GM10248 (cell line): ENCODE measurements at regions of chr5 and their contacts with region 1.

Region 1: GRCh38 chr5:173615884-173616576 is 420 bp downstream of the BOD1 start:
- DNase-seq: peak; percentile 75
- CTCF ChIP-seq: peak; percentile 64

Region 2: DNA sequence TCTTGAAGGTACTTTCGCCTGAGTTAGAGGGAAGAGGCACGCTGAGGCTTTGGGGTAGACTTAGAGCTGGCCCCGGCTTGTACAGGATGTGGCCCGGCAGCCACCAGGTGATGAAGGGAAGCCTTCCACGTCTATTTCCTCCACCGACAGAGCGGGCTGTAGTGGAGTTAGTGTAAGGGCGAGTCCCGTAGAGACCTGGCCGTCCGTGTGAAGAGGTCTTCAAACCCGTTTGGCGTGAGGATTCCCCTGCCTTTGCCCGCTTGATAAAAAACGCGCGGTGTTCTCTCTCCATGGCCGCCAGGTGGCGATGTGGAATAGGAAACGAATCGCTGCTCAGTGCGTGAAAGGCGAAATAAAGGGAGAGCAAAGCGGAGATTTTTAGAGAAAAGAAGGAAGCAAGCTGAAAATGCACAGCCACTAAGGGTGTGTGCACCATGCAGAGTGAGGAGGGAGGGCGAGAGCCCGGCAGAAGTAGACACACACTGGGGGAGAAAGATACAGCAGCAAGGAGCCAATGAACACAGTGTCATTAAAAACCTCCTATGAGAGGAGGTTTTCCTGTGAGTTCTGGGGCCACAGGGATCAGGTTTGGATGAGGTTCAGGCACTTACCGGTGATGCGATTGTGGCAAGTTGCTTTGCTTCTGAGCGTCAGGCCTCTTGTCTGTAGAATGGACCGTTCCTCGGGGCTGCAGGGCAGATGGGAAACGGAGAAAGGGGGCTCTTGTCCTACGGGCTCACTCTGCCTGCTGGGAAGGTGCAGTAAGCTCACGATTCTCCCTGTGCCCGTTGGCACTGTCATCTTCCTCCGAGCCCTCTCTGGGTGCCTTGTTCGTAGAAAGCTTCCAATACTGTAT is 322.0 kb before region 1 on chr5:
- CTCF ChIA-PET with region 1: interaction called, 17 read pairs
- POLR2A ChIA-PET with region 1: no interaction called
- DNase-seq: peak; percentile 81
- CTCF ChIP-seq: peak; percentile 90

Region 3: DNA sequence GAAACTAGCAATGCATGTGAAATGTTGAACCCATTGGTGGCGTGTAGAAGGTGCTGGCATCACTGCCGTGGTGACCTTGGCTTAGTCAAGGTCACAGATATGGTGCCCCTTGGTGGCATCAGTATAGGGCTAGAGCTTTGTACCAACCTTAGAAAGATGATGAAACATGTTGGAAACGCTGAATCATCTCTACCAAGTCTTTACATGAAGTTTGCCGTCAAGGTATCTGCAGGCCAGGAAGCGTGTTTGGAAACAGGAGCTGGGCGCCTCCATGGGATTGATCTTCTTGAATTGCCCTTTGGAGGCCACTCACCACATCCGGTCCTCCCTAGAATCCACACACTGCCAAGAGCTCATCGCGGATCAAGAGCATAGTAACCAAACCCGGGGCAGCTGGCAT is 17.3 kb after region 1 on chr5:
- CTCF ChIA-PET with region 1: interaction called, 44 read pairs
- POLR2A ChIA-PET with region 1: no interaction called
- DNase-seq: no peak
- CTCF ChIP-seq: no peak

Region 4: GRCh38 chr5:173925448-173926071 is 309.5 kb after region 1 on chr5:
- CTCF ChIA-PET with region 1: interaction called, 18 read pairs
- POLR2A ChIA-PET with region 1: no interaction called
- DNase-seq: peak; percentile 28
- CTCF ChIP-seq: peak; percentile 73

Region 5: GRCh38 chr5:173972925-173973615 is 357.0 kb after region 1 on chr5:
- CTCF ChIA-PET with region 1: interaction called, 247 read pairs
- POLR2A ChIA-PET with region 1: interaction called, 4 read pairs
- DNase-seq: peak; percentile 87
- CTCF ChIP-seq: peak; percentile 72

Region 6: DNA sequence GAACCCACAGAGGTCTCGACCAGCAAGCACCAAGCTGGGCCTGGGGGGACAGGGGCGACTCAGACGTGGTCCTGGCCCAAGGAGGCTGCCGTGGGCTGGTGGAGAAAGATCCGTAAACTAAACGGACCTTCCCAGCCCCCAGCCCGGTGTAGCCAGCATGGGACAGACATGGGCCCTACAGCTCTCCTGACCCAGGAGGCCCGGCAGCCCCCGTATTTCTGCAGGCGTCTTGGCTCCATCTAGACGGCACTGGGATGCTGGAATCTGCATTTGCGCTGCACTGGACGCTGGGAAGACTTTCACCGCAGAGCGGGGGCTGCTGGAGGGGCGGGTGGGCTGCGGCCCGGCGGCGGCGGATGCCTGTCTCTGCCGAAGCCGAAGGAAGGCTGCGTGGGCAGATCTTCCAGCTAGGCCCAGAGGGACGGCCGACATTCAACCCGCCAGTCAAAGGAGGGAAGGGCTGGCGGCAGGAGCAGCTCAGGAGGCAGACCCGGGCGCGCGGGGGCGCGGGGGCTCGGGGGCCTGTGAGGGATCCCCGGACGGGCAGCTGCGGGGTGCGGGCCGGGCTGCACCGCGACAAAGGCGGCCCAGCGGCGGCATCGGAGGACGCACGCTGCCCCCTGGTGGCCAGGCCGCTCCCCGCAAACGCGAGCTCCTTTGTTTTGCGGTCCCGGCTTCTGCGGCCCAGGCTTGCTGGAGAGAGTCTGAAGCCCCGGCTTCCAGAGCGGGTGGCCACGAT is 695.7 kb after region 1 on chr5:
- CTCF ChIA-PET with region 1: interaction called, 33 read pairs
- POLR2A ChIA-PET with region 1: no interaction called
- DNase-seq: peak; percentile 85
- CTCF ChIP-seq: peak; percentile 90